Activated CD4-positive, alpha-beta T cell treated with anti-CD3 and anti-CD28 coated beads for 36 hours (primary cell): ENCODE measurements at regions of chr1 and their contacts with region 1.

Region 1: DNA sequence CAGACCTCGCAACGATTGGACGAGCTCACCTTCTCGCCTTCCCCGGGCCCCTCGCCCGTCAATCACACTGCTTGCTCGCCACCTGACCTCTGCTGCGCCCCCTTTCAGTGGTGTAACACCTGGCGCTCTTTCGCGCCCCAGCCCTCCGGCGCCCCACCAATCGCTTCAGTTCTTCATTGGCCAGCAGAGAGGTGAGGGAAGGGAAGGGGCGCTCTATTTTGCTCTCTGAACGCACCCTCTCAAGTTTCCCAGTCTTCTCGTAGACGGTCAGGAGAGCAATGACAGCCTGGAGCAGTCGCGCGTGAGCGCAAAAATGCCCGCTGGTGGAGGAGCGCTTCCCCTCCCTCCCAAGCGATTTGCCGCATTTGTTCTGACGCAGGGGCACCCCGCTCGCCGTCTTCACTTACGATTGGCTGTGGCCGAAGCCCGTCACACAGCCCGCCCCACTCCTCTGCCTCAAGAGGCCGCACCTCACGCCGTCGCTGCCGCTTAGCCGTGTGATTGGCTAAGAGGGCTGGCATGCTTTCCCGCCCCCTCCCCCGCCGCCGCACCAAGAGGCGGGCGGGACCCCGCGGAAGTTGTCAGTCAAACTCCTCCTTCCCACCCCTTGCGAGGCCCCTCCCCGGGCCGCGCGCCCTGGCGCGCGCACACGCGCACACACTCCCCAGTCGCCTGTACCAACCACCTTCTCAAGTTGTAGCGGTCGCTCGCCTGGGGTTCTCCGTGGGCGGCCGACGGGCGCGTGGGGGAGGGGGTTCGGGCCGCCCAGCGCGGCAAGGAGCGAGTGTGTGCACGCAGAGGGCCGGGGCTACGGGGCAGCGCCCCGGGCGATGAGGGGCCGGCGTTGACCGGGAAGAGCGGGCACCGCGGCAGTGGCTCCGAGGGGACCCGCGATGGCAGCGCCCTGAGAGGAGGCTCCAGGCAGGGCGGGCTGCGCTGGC is at the start of gene PPP2R5A:
- DNase-seq: peak; percentile 99
- ATAC-seq: peak; percentile 93
- H3K4me3 Mint-ChIP-seq: peak within 1 kb of the TSS; percentile 92
- H3K27ac Mint-ChIP-seq: peak within 1 kb of the TSS; percentile 96
- H3K4me1 Mint-ChIP-seq: peaks cover 32% of the 10 kb centered on the region
- H3K27me3 Mint-ChIP-seq: no peaks in the 10 kb centered on the region
- total RNA-seq, gene PPP2R5A: 32.3 to 36.1 TPM

Region 2: GRCh38 chr1:211830330-211831142 is 454.5 kb before region 1 on chr1 and contains the start of gene LPGAT1:
- CTCF ChIA-PET with region 1: no interaction called
- POLR2A ChIA-PET with region 1: no interaction called
- intact Hi-C with region 1: loop called in 1 of 2 experiments (anchors 2 kb)
- DNase-seq: peak; percentile 86
- ATAC-seq: peak; percentile 83
- H3K4me3 Mint-ChIP-seq: peak within 1 kb of the TSS; percentile 82
- H3K27ac Mint-ChIP-seq: peak within 1 kb of the TSS; percentile 85
- H3K4me1 Mint-ChIP-seq: peaks cover 57% of the 10 kb centered on the region
- H3K27me3 Mint-ChIP-seq: no peaks in the 10 kb centered on the region
- total RNA-seq, gene LPGAT1: 21.7 to 24.9 TPM

Region 3: DNA sequence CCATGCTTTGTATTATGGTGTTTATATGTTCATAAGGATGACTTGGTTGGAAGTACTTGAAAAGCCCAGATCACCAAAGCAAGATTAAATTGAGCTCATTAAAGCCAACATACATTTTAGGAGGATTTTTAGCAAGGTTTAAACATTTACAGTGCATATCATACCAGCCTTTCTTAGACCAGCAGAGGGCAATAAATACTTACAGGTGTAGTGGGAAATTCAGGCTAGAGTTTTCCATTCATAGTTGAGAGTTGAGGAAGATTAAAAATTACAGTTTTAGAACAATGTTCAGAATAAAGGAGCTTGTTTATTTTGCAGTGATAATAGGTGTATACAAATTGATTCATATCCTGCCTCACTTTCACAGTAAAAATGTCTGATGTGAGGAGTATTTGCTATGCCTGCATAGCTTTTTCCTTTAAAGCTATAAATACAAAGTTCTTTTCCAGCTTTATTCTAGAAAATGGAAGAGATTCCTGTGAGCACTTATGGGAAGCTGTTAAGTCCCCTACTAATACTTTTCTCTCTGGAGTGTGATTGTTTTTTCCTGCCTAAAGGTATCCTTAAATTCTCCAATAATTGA is 214.2 kb before region 1 on chr1:
- CTCF ChIA-PET with region 1: interaction called, 3 read pairs
- POLR2A ChIA-PET with region 1: no interaction called
- intact Hi-C with region 1: loop called in 1 of 2 experiments (anchors 5 kb)
- DNase-seq: no peak
- ATAC-seq: no peak
- H3K4me3 Mint-ChIP-seq: no peak overlapping the region
- H3K27ac Mint-ChIP-seq: no peak overlapping the region
- H3K4me1 Mint-ChIP-seq: no peaks in the 10 kb centered on the region
- H3K27me3 Mint-ChIP-seq: no peaks in the 10 kb centered on the region

Region 4: GRCh38 chr1:212186427-212187207 is 98.4 kb before region 1 on chr1:
- CTCF ChIA-PET with region 1: no interaction called
- POLR2A ChIA-PET with region 1: no interaction called
- intact Hi-C with region 1: no loop called
- DNase-seq: no peak
- ATAC-seq: peak; percentile 59
- H3K4me3 Mint-ChIP-seq: no peak overlapping the region
- H3K27ac Mint-ChIP-seq: peak overlapping the region; percentile 8
- H3K4me1 Mint-ChIP-seq: peaks cover 19% of the 10 kb centered on the region
- H3K27me3 Mint-ChIP-seq: no peaks in the 10 kb centered on the region

Region 5: DNA sequence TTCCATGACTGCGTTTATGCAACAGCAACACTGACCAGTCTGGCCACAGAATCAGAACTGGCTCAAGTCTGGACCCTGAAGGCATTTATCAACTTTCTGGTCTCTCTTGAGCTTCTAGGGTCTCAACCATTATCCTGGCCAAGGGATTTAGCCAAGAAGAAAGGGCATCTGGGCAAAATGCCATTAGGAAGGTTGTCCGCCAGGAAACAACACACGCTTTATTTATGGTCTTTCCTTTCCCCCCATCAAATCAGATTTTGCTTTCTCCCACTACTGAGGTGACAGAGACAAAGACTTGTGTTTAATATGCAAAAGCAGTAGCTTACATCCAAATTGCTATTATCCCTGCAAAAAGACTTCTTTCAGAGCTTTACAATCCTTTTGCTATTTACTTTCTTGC is 81.4 kb before region 1 on chr1:
- CTCF ChIA-PET with region 1: no interaction called
- POLR2A ChIA-PET with region 1: no interaction called
- intact Hi-C with region 1: no loop called
- DNase-seq: no peak
- ATAC-seq: no peak
- H3K4me3 Mint-ChIP-seq: no peak overlapping the region
- H3K27ac Mint-ChIP-seq: no peak overlapping the region
- H3K4me1 Mint-ChIP-seq: no peaks in the 10 kb centered on the region
- H3K27me3 Mint-ChIP-seq: no peaks in the 10 kb centered on the region

Region 6: DNA sequence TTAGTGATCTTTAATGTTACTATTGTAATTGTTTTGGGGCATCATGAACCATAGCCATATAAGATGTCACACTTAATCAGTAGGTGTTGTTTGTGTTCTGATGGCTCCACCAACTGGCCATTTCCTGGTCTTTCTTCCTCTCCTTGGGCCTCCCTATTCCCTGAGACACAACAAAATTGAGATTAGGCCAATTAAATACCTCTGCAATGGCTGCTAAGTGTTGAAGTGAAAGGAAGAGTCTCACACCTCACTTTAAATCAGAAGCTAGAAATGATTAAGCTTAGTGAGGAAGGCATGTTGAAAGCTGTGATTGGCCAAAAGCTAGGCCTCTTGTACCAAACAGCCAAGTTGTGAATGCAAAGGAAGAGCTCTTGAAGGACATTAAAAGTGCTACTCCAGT is 30.9 kb after region 1 on chr1:
- CTCF ChIA-PET with region 1: interaction called, 4 read pairs
- POLR2A ChIA-PET with region 1: interaction called, 7 read pairs
- intact Hi-C with region 1: loop called in 1 of 2 experiments (anchors 1 kb)
- DNase-seq: peak; percentile 21
- ATAC-seq: peak; percentile 87
- H3K4me3 Mint-ChIP-seq: no peak overlapping the region
- H3K27ac Mint-ChIP-seq: peak overlapping the region; percentile 8
- H3K4me1 Mint-ChIP-seq: peaks cover 42% of the 10 kb centered on the region
- H3K27me3 Mint-ChIP-seq: no peaks in the 10 kb centered on the region

Region 7: GRCh38 chr1:212432706-212433576 is 147.9 kb after region 1 on chr1 and contains the start of gene NENF:
- CTCF ChIA-PET with region 1: no interaction called
- POLR2A ChIA-PET with region 1: no interaction called
- intact Hi-C with region 1: loop called in 1 of 2 experiments (anchors 1 kb)
- DNase-seq: peak; percentile 88
- ATAC-seq: peak; percentile 99
- H3K4me3 Mint-ChIP-seq: peak within 1 kb of the TSS; percentile 75
- H3K27ac Mint-ChIP-seq: peak within 1 kb of the TSS; percentile 56
- H3K4me1 Mint-ChIP-seq: peaks cover 39% of the 10 kb centered on the region
- H3K27me3 Mint-ChIP-seq: no peaks in the 10 kb centered on the region
- total RNA-seq, gene NENF: 30.8 to 34.1 TPM

Region 8: DNA sequence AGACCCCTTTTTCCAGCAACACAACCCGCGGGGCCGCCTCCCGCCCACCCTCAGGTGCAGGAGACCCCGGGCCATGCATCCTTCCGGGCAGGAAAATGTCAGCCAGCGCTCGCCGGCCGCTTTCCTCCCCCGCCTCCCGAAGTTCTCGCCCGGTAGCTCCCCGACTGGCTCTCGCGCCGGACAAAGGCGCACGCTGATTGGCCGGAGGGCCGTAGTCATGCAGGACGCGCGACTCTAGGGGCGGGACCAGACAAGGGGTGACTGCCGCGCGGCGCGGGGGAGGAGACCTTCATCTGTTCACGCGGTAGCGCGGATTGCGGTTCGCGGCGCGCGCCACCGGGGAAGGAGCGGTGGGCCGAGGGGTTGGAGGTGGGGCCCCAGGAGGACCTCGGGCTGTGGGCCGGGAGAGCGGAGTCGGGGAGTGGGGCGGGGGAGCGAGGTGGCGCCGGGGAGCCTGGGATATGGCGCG is 573.0 kb after region 1 on chr1 and contains the start of gene FLVCR1:
- CTCF ChIA-PET with region 1: no interaction called
- POLR2A ChIA-PET with region 1: no interaction called
- intact Hi-C with region 1: loop called in 1 of 2 experiments (anchors 2 kb)
- DNase-seq: peak; percentile 98
- ATAC-seq: peak; percentile 98
- H3K4me3 Mint-ChIP-seq: no peak within 1 kb of the TSS
- H3K27ac Mint-ChIP-seq: peak within 1 kb of the TSS; percentile 92
- H3K4me1 Mint-ChIP-seq: peaks cover 15% of the 10 kb centered on the region
- H3K27me3 Mint-ChIP-seq: no peaks in the 10 kb centered on the region
- total RNA-seq, gene FLVCR1: 13.5 to 13.9 TPM